H1 (cell line): ENCODE measurements at regions of chr5 and their contacts with region 1.

Region 1: GRCh38 chr5:180718810-180719453 is 20.9 kb downstream of the OR2Y1 start:
- DNase-seq: no peak
- H3K4me3 ChIP-seq: no peak overlapping the region
- H3K27ac ChIP-seq: no peak overlapping the region
- H3K4me1 ChIP-seq: peaks cover 0 to 3% (median 0%) of the 10 kb centered on the region in 4 experiments; a peak in 2 of 7 replicates
- H3K27me3 ChIP-seq: no peaks in the 10 kb centered on the region
- CTCF ChIP-seq: peak in 2 of 3 experiments; percentile 57 to 61; a peak in 3 of 4 replicates
- EP300 ChIP-seq: no peak
- POLR2A ChIP-seq: no peak
- RAD21 ChIP-seq: peak; percentile 55 to 62

Region 2: DNA sequence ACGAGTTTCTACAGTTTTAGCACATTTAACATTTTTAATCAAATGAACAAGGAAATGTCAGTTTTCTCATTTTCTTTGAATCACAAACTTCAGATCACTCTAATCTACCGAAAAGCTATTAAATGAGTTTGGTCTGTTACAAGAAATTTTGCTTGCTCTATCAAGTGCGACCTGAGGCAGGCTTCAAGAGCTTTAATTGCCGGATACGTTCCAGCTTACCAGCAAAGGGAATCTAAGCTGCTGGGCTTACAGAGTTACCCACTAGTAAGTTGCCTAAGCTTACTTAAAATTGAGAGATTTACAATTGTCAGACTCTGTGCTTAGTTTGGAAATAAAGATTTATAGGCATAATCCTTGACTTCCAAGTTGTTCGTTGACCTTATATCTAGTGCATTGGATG is 138.3 kb before region 1 on chr5:
- CTCF ChIA-PET with region 1: no interaction called
- POLR2A ChIA-PET with region 1: no interaction called
- DNase-seq: no peak
- H3K4me3 ChIP-seq: no peak overlapping the region
- H3K27ac ChIP-seq: no peak overlapping the region
- H3K4me1 ChIP-seq: peaks cover 0 to 3% (median 0%) of the 10 kb centered on the region in 4 experiments; a peak in 1 of 7 replicates
- H3K27me3 ChIP-seq: no peaks in the 10 kb centered on the region
- CTCF ChIP-seq: no peak
- EP300 ChIP-seq: no peak
- POLR2A ChIP-seq: no peak
- RAD21 ChIP-seq: no peak

Region 3: DNA sequence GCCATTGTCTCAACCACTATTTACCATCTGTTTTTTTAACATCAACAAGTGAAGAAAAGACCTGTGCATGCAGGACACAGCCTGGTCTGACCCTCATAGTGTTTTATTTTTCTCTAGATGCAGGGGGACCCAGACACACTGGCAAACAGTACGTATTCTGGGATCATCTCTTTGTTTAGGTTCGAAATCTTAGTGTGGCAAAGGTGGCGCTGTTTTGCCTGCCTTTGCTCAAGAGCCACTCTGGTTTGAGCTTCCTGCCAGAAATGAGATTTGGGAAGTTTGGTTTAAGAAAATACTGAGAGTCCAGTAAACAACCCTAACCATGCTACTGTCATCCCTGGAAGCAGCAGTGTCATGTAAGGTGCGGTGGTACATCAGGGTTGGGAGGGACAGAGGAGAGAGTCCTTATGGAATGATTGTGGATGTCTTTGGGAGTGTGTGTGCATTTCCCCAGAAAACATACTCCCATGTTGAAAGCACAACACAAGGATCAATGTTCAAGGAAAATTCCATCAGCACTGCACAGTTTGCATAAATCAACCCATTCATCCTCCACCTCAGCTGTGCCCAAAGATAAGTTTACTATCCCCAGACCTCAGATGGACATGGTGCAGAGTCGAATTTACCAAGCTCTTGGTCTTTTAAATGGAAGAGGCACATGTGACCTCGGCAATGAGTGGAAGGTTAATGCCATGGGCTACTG is 35.6 kb before region 1 on chr5:
- CTCF ChIA-PET with region 1: interaction called, 20 read pairs
- POLR2A ChIA-PET with region 1: no interaction called
- DNase-seq: peak in 1 of 2 experiments; percentile 44
- H3K4me3 ChIP-seq: no peak overlapping the region
- H3K27ac ChIP-seq: no peak overlapping the region
- H3K4me1 ChIP-seq: no peaks in the 10 kb centered on the region
- H3K27me3 ChIP-seq: no peaks in the 10 kb centered on the region
- CTCF ChIP-seq: peak in 2 of 3 experiments; percentile 14 to 25; a peak in 2 of 4 replicates
- EP300 ChIP-seq: no peak
- POLR2A ChIP-seq: no peak
- RAD21 ChIP-seq: peak in 1 of 2 experiments; percentile 25; a peak in 2 of 4 replicates

Region 4: DNA sequence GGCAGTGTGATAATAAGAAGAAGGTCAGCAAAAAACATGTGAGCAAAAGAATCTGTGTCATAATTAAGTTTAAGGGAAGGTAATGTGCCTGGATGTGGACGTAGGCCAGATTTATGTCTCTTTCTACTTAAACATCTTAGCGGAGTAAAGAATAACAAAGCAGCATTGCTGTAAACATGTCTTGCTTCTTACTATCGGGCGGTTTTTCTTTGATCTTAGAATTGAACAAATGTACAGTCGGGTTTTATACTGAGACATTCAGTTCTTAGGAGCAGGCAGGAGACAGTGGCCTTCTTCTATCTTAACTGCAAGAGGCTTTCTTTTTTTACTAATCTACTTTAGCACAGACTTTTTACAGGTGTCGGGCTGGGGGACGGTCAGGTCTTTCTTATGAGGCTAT is 29.2 kb before region 1 on chr5:
- CTCF ChIA-PET with region 1: interaction called, 23 read pairs
- POLR2A ChIA-PET with region 1: no interaction called
- DNase-seq: no peak
- H3K4me3 ChIP-seq: no peak overlapping the region
- H3K27ac ChIP-seq: no peak overlapping the region
- H3K4me1 ChIP-seq: peaks cover 0 to 8% (median 5%) of the 10 kb centered on the region in 4 experiments; a peak in 4 of 7 replicates
- H3K27me3 ChIP-seq: no peaks in the 10 kb centered on the region
- CTCF ChIP-seq: no peak
- EP300 ChIP-seq: no peak
- POLR2A ChIP-seq: no peak
- RAD21 ChIP-seq: no peak

Region 5: DNA sequence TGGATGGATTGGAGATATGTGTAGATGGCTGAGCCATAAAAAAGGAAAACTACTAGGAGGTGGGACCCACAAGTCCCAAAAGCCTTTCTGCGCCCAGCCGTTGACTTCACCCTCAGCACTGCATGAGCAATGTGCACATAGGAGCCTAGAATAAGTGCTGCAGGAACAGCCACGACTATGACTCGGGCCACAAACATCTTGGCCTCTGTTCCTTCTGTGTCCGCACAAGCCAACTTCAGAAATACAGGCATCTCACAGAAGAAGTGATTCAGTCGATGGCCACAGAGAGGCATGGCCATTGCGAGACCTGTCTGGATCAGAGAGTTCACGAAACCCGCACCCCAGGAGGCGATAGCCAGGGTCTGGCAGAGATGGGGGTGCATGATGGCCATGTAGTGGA is 20.3 kb after region 1 on chr5:
- CTCF ChIA-PET with region 1: interaction called, 17 read pairs
- POLR2A ChIA-PET with region 1: no interaction called
- DNase-seq: no peak
- H3K4me3 ChIP-seq: no peak overlapping the region
- H3K27ac ChIP-seq: no peak overlapping the region
- H3K4me1 ChIP-seq: no peaks in the 10 kb centered on the region
- H3K27me3 ChIP-seq: no peaks in the 10 kb centered on the region
- CTCF ChIP-seq: no peak
- EP300 ChIP-seq: no peak
- POLR2A ChIP-seq: no peak
- RAD21 ChIP-seq: no peak

Region 6: GRCh38 chr5:180852495-180852894 is 133.6 kb after region 1 on chr5:
- CTCF ChIA-PET with region 1: no interaction called
- POLR2A ChIA-PET with region 1: no interaction called
- DNase-seq: no peak
- H3K4me3 ChIP-seq: no peak overlapping the region
- H3K27ac ChIP-seq: no peak overlapping the region
- H3K4me1 ChIP-seq: no peaks in the 10 kb centered on the region
- H3K27me3 ChIP-seq: no peaks in the 10 kb centered on the region
- CTCF ChIP-seq: no peak
- EP300 ChIP-seq: no peak
- POLR2A ChIP-seq: no peak
- RAD21 ChIP-seq: no peak